Activated T-helper 1 cell treated with anti-CD3 and anti-CD28 coated beads, Interleukin-12 subunit alpha, Interleukin-12 subunit beta, Interleukin-2, Interleukin-4 antibody, amounts not matched to agents 30 ng/mL and 10 ng/mL and 1 ng/mL, durations not matched to agents 14 hours and 24 hours and 36 hours (primary cell): ENCODE measurements at regions of chr11 and their contacts with region 1.

Region 1: DNA sequence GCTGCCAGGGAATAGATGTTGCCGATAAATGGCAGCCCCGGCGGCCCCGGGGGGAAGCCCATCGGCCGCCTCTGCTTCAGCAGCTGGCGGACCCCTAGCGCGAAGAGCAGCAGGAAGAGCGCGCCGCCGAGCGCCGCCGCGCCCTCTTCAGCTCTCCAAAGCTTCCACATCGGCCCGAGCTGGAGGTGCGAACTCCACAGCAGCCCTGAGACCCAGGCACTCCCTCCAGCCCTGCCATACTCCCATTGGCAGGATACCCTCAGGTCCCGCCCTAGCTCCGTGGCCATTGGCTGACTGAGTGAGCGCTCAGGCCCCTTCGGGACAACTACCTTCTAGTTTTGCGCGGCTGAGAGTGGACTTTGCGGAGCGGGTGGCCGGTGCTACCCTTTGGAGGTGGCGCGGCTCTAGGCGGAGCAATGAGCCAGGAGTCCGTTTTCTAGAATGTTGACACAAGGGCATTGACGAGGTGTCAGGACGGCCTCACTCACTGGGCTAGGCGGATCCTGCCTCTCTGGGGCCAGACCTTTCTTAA is at the start of gene CYP2R1:
- DNase-seq: peak; percentile 90
- H3K4me3 Mint-ChIP-seq: peak within 1 kb of the TSS; percentile 90
- H3K27ac Mint-ChIP-seq: peak within 1 kb of the TSS; percentile 98
- H3K4me1 Mint-ChIP-seq: peaks cover 61% of the 10 kb centered on the region
- H3K27me3 Mint-ChIP-seq: no peaks in the 10 kb centered on the region
- total RNA-seq, gene CYP2R1: 13.7 and 14.3 TPM in 2 replicates

Region 2: GRCh38 chr11:13289081-13289480 is 1603.0 kb before region 1 on chr11:
- intact Hi-C with region 1: loop called (anchors 5 kb)
- DNase-seq: no peak
- H3K4me3 Mint-ChIP-seq: no peak overlapping the region
- H3K27ac Mint-ChIP-seq: peak overlapping the region; percentile 84
- H3K4me1 Mint-ChIP-seq: peaks cover 84% of the 10 kb centered on the region
- H3K27me3 Mint-ChIP-seq: no peaks in the 10 kb centered on the region

Region 3: DNA sequence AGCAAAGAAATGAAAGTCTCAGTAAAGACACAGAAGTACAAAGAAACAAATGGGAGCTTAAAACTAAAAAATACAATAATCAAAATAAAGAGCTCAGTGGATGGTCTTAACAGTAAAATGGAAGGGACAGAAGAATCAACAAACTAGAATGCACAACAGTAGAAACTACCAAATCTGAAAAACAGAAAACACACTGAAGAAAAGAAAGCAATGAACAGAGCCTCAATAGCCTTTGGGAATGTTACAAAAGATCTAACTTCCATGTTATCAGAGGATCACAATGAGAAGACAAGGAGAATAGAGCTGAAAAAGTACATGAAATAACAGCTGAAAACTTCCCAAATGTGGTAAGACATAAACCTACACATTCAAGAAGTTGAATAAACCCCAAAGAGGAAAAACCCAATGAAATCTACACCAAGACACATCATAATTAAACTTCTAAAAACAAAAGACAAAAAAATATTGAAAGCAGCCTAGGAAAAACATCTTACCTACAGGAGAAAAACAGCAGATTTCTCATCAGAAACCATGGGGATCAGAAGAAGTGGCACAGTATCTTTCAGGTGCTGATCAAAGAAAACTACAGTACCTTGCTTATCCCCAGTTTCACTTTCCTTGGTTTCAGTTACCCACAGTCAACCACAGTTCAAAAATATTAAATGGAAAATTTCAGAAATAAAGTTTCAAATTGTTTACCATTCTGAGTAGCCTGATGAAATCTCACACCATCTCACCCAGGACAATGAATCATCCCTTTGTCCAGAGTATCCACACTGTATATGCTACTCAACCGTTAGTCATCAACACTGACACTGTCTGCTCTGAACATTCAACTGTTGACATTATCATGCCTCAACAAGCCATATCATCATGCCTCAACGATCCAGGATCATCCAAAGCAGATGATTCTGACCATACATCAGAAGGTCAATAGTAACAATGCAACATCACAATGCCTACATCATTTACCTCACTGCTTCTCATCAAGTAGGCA is 555.3 kb before region 1 on chr11:
- intact Hi-C with region 1: loop called (anchors 2 kb)
- DNase-seq: no peak
- H3K4me3 Mint-ChIP-seq: no peak overlapping the region
- H3K27ac Mint-ChIP-seq: peak overlapping the region; percentile 82
- H3K4me1 Mint-ChIP-seq: peaks cover 58% of the 10 kb centered on the region
- H3K27me3 Mint-ChIP-seq: no peaks in the 10 kb centered on the region

Region 4: GRCh38 chr11:14499554-14500180 is 392.4 kb before region 1 on chr11 and contains the start of gene COPB1:
- intact Hi-C with region 1: loop called (anchors 1 kb)
- DNase-seq: peak; percentile 90
- H3K4me3 Mint-ChIP-seq: peak within 1 kb of the TSS; percentile 100
- H3K27ac Mint-ChIP-seq: peak within 1 kb of the TSS; percentile 98
- H3K4me1 Mint-ChIP-seq: peaks cover 49% of the 10 kb centered on the region
- H3K27me3 Mint-ChIP-seq: no peaks in the 10 kb centered on the region
- total RNA-seq, gene COPB1: 94.8 and 101 TPM in 2 replicates

Region 5: DNA sequence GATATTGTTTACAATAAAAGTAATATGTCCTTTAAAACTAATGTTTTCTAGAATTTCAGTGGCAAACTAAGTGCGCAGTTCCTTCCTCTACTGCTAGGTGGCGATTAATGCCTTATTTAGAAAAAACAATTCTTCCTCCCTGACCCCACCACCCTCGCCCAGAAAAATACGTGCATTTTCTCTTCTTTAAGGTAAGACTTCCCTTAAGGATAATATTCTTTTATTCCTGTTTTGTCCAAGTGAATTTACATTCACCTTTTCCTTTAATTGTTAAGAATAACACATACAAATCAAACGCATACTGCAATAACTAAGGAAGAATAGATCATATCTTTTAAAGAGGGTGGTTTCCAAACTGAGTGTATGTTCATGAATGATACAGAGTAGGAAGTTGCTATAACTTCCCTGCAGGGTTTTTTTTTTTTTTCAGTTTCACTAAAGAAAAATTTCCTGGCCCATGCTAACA is 354.9 kb before region 1 on chr11:
- intact Hi-C with region 1: loop called (anchors 1 kb)
- DNase-seq: peak; percentile 12
- H3K4me3 Mint-ChIP-seq: peak overlapping the region; percentile 74
- H3K27ac Mint-ChIP-seq: peak overlapping the region; percentile 89
- H3K4me1 Mint-ChIP-seq: peaks cover 48% of the 10 kb centered on the region
- H3K27me3 Mint-ChIP-seq: no peaks in the 10 kb centered on the region

Region 6: GRCh38 chr11:14578541-14578956 is 313.6 kb before region 1 on chr11:
- intact Hi-C with region 1: loop called (anchors 1 kb)
- DNase-seq: peak; percentile 76
- H3K4me3 Mint-ChIP-seq: peak overlapping the region; percentile 21
- H3K27ac Mint-ChIP-seq: peak overlapping the region; percentile 84
- H3K4me1 Mint-ChIP-seq: peaks cover 71% of the 10 kb centered on the region
- H3K27me3 Mint-ChIP-seq: no peaks in the 10 kb centered on the region

Region 7: DNA sequence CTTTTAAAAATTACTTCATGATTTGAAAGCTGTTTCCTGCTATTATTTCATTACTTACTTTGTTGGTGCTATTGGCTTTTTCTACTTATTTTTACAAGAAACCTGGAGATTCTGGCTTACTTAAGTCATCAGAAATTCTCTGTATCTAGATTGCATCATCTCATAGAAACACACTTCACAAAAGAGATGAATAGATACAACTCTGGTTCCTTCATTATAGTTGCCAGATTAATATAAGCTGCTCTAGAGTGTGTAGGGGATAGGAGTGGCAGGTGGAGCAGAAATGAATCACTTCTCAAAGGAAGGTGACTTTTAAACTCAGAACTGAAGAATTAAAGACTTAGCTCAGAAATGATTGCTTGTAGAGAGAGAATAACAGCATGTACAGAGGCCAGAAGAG is 20.1 kb before region 1 on chr11:
- intact Hi-C with region 1: no loop called
- DNase-seq: no peak
- H3K4me3 Mint-ChIP-seq: no peak overlapping the region
- H3K27ac Mint-ChIP-seq: peak overlapping the region; percentile 33
- H3K4me1 Mint-ChIP-seq: peaks cover 20% of the 10 kb centered on the region
- H3K27me3 Mint-ChIP-seq: peaks cover 2% of the 10 kb centered on the region

Region 8: GRCh38 chr11:14907411-14908213 is 15.5 kb after region 1 on chr11:
- intact Hi-C with region 1: loop called (anchors 1 kb)
- DNase-seq: peak; percentile 76
- H3K4me3 Mint-ChIP-seq: peak overlapping the region; percentile 23
- H3K27ac Mint-ChIP-seq: no peak overlapping the region
- H3K4me1 Mint-ChIP-seq: peaks cover 63% of the 10 kb centered on the region
- H3K27me3 Mint-ChIP-seq: no peaks in the 10 kb centered on the region